ENCODE measurements at regions of chrX and their contacts with region 1.

Region 1: DNA sequence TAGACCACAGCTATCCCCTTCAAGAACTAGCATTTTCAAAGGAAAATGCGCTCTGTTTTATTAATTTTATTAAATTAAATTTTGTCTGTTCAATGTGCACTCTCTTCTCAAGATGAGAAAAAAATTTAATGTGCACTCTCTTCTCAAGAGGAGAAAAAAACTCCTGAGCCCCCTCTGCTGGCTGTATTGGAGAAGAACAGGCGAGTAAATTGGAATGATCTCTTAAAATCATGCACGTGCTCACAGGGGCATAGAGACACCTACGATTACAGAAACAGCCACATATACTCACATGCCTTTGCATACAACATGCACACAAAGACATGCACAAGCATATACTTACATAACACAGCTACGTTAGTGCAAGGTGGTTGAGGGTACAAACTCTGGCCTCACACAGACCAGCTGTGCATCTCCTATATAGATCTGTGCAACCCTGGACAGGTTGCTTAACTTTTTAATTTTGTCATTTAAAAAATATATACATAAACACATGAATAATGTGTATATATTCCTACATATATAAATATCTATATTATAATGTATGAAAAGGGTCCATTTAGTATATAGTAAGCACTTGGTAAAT is 176.2 kb upstream of the CXorf66 start:
- DNase-seq: no peak
- H3K4me3 ChIP-seq: no peak overlapping the region
- H3K27ac ChIP-seq: no peak overlapping the region
- H3K4me1 ChIP-seq: no peaks in the 10 kb centered on the region
- H3K27me3 ChIP-seq: no peaks in the 10 kb centered on the region
- CTCF ChIP-seq: peak in 2 of 3 experiments; percentile 34 to 38
- POLR2A ChIP-seq: no peak

Region 2: GRCh38 chrX:139691843-139692505 is 449.6 kb before region 1 on chrX:
- intact Hi-C with region 1: no loop called
- DNase-seq: no peak
- H3K4me3 ChIP-seq: peak overlapping the region; percentile 7 to 32
- H3K27ac ChIP-seq: no peak overlapping the region
- H3K4me1 ChIP-seq: peaks cover 8% of the 10 kb centered on the region
- H3K27me3 ChIP-seq: no peaks in the 10 kb centered on the region
- CTCF ChIP-seq: no peak
- POLR2A ChIP-seq: no peak

Region 3: GRCh38 chrX:140071037-140071436 is 70.5 kb before region 1 on chrX:
- intact Hi-C with region 1: loop called (anchors 5 kb)
- DNase-seq: no peak
- H3K4me3 ChIP-seq: no peak overlapping the region
- H3K27ac ChIP-seq: no peak overlapping the region
- H3K4me1 ChIP-seq: no peaks in the 10 kb centered on the region
- H3K27me3 ChIP-seq: no peaks in the 10 kb centered on the region
- CTCF ChIP-seq: no peak
- POLR2A ChIP-seq: no peak

Region 4: DNA sequence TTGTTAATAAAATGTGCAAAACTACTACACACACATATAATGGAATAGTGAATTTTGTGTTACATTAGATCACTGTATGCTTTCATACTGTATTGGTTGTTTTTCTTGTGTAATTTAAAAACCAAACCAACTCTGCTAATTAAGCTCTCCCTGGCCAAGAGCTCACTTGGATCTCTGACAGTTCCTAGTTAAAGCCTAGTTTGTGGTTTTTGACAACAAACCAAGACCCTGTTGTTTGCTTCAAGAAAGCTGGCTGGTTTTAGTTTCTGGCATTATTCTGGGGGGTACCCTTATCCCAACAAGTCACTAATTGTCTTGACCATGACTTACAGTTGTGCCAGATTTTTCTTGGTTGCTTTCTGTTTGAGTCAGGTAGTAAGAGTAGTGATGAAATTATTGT is 54.8 kb before region 1 on chrX:
- intact Hi-C with region 1: no loop called
- DNase-seq: no peak
- H3K4me3 ChIP-seq: no peak overlapping the region
- H3K27ac ChIP-seq: no peak overlapping the region
- H3K4me1 ChIP-seq: no peaks in the 10 kb centered on the region
- H3K27me3 ChIP-seq: no peaks in the 10 kb centered on the region
- CTCF ChIP-seq: no peak
- POLR2A ChIP-seq: no peak

Region 5: DNA sequence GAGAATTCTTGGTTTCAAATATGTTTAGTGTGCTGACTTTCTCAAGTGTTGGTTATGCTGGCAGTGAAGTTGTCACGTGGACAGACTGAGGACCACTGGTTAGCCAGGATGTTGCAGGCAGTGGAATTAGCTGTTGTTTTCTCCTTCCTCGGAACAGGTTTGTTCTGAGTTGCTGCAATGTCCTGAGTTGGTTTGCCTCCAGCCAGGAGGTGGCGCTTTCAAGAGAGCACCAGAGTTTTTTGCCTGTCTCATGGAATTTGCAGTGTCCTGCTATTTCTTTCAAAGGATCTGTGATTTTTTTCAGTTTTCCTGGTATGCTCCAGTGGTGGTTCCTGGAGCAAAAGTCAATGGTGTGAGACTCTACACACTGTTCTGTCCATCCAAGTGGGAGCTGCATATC is 18.1 kb before region 1 on chrX:
- intact Hi-C with region 1: no loop called
- DNase-seq: no peak
- H3K4me3 ChIP-seq: no peak overlapping the region
- H3K27ac ChIP-seq: no peak overlapping the region
- H3K4me1 ChIP-seq: no peaks in the 10 kb centered on the region
- H3K27me3 ChIP-seq: no peaks in the 10 kb centered on the region
- CTCF ChIP-seq: no peak
- POLR2A ChIP-seq: no peak

Region 6: DNA sequence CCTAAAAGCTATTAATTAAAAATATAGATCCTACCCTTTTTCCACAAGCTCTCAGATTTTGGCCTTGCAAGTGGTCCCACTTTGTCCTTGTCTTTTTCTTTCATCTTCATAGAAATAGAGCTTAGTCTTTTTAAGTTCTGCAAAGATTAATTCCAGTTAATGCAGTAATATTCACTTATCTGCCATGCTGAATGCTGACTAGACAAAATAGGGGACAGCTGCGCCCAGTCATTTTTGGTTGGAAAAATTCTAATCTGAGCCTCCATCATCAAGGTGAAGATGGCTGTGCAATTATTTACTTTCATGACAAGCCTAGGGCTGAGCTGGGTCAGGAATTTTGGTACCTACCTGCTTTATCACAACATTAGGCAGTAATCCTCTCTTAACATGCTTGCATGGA is 65.1 kb after region 1 on chrX:
- intact Hi-C with region 1: no loop called
- DNase-seq: no peak
- H3K4me3 ChIP-seq: no peak overlapping the region
- H3K27ac ChIP-seq: no peak overlapping the region
- H3K4me1 ChIP-seq: no peaks in the 10 kb centered on the region
- H3K27me3 ChIP-seq: no peaks in the 10 kb centered on the region
- CTCF ChIP-seq: no peak
- POLR2A ChIP-seq: no peak